Transverse colon (tissue), 4 donors: ENCODE measurements at regions of chrX and their contacts with region 1.

Region 1: GRCh38 chrX:116915963-116916362 is 453.2 kb upstream of the CT83 start:
- DNase-seq: no peak
- H3K4me3 ChIP-seq: no peak overlapping the region
- H3K27ac ChIP-seq: no peak overlapping the region
- H3K4me1 ChIP-seq: no peaks in the 10 kb centered on the region
- H3K27me3 ChIP-seq: no peaks in the 10 kb centered on the region
- CTCF ChIP-seq: no peak
- EP300 ChIP-seq: no peak
- POLR2A ChIP-seq: no peak

Region 2: GRCh38 chrX:116841290-116841689 is 74.7 kb before region 1 on chrX:
- in situ Hi-C with region 1: no loop called
- intact Hi-C with region 1: loop called (anchors 2 kb)
- DNase-seq: no peak
- H3K4me3 ChIP-seq: no peak overlapping the region
- H3K27ac ChIP-seq: no peak overlapping the region
- H3K4me1 ChIP-seq: no peaks in the 10 kb centered on the region
- H3K27me3 ChIP-seq: no peaks in the 10 kb centered on the region
- CTCF ChIP-seq: no peak
- EP300 ChIP-seq: no peak
- POLR2A ChIP-seq: no peak